GM23248 (cell line): ENCODE measurements at regions of chr21 and their contacts with region 1.

Region 1: GRCh38 chr21:29372063-29372802 is 73.5 kb downstream of the BACH1 start:
- DNase-seq: peak; percentile 82
- H3K4me3 ChIP-seq: no peak overlapping the region
- H3K27ac ChIP-seq: no peak overlapping the region
- H3K4me1 ChIP-seq: no peaks in the 10 kb centered on the region
- H3K27me3 ChIP-seq: no peaks in the 10 kb centered on the region

Region 2: DNA sequence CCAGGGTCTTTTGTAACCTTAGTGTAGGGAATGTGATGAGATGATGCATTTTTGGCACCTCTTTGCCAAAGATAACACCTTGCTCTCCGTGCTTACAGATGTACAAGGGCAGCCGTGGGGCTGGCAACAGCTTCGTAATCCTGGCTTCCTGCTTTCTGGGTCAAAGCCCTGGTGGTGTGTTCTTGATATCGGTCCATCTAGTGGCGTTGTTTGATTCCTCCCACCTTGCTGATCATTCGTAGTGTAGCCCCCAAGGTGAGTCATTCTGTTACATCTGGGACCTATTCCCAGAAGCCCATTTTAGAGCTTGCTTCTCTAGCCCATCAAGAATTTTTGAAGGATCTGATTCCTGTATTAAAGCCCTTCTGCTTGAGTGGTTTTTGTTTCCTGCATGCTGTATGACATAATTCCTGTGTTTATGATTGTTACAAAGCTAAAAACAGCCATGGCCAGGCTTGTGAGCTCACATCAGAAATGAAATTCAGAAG is 291.7 kb before region 1 on chr21:
- in situ Hi-C with region 1: loop called (anchors 10 kb)
- DNase-seq: no peak
- H3K4me3 ChIP-seq: no peak overlapping the region
- H3K27ac ChIP-seq: no peak overlapping the region
- H3K4me1 ChIP-seq: no peaks in the 10 kb centered on the region; the same call in 1 of the 2 replicates
- H3K27me3 ChIP-seq: no peaks in the 10 kb centered on the region

Region 3: GRCh38 chr21:29164325-29164942 is 207.8 kb before region 1 on chr21:
- in situ Hi-C with region 1: loop called (anchors 10 kb)
- DNase-seq: peak; percentile 88
- H3K4me3 ChIP-seq: no peak overlapping the region
- H3K27ac ChIP-seq: peak overlapping the region; percentile 92
- H3K4me1 ChIP-seq: peaks cover 33% of the 10 kb centered on the region
- H3K27me3 ChIP-seq: no peaks in the 10 kb centered on the region

Region 4: DNA sequence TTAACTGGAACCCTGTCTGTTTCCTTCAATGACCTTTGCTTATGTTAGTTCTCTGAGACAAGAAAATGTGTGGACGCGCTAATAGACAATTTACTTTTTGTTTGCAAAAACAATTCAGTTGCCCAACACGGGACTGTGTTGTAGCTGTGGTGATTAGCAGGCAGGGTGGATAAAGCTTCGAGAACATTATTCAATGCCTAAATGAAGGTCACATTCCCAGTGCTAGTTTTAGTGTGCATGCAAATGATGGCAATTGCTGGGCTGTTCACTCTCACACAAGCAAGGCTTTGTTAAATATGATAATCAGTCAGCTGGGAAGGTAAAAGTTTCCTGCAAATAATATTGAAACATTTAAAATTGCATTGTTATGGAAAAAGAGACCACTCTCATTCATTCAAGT is 114.9 kb after region 1 on chr21:
- in situ Hi-C with region 1: no loop called
- DNase-seq: no peak
- H3K4me3 ChIP-seq: no peak overlapping the region
- H3K27ac ChIP-seq: no peak overlapping the region
- H3K4me1 ChIP-seq: peaks cover 2% of the 10 kb centered on the region; the same call in 1 of the 2 replicates
- H3K27me3 ChIP-seq: no peaks in the 10 kb centered on the region